ENCODE measurements at regions of chr14 and their contacts with region 1.

Region 1: DNA sequence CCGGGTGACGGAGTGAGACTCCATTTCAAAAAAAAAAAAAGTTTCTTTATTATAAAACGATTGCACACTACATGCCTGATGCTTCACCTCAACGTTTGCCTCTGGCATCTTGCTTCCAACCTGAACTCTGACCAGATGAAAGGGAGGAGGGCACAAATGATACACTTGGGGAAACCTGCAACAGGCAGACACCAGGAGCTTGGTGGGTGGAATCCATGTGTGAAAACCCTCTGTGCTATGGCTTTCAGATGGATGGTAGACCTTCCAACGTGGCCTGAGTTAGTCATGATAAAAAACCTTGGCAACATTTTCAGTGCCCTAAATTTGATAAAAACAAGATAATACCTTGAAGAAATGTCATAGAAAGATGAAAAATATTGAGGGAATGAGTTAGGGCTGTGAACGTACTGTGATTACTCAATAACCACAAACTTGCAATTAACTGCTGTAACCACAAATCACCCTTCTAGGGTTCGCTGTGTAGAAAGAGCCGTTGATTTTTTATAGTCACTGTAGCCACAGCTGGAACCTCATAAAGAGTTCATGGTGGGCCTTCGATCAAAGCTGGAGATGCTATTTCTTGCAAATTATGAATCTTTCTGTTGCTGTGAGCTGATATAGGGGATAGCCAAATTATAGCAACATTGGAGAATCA is 26.1 kb upstream of the GZMB start:
- DNase-seq: no peak
- H3K4me3 Mint-ChIP-seq: peak overlapping the region; percentile 69
- H3K27ac Mint-ChIP-seq: peak overlapping the region; percentile 90
- H3K4me1 Mint-ChIP-seq: peaks cover 68% of the 10 kb centered on the region
- H3K27me3 Mint-ChIP-seq: no peaks in the 10 kb centered on the region

Region 2: GRCh38 chr14:24605435-24606190 is 54.4 kb before region 1 on chr14:
- intact Hi-C with region 1: no loop called
- DNase-seq: peak; percentile 63
- H3K4me3 Mint-ChIP-seq: peak overlapping the region; percentile 74
- H3K27ac Mint-ChIP-seq: peak overlapping the region; percentile 88
- H3K4me1 Mint-ChIP-seq: peaks cover 49% of the 10 kb centered on the region
- H3K27me3 Mint-ChIP-seq: peaks cover 1% of the 10 kb centered on the region

Region 3: GRCh38 chr14:24639905-24640304 is 20.1 kb before region 1 on chr14:
- intact Hi-C with region 1: loop called (anchors 1 kb)
- DNase-seq: no peak
- H3K4me3 Mint-ChIP-seq: peak overlapping the region; percentile 0
- H3K27ac Mint-ChIP-seq: peak overlapping the region; percentile 76
- H3K4me1 Mint-ChIP-seq: peaks cover 60% of the 10 kb centered on the region
- H3K27me3 Mint-ChIP-seq: no peaks in the 10 kb centered on the region

Region 4: GRCh38 chr14:24673534-24674203 is 13.6 kb after region 1 on chr14:
- intact Hi-C with region 1: loop called (anchors 1 kb)
- DNase-seq: peak; percentile 75
- H3K4me3 Mint-ChIP-seq: peak overlapping the region; percentile 73
- H3K27ac Mint-ChIP-seq: peak overlapping the region; percentile 97
- H3K4me1 Mint-ChIP-seq: peaks cover 78% of the 10 kb centered on the region
- H3K27me3 Mint-ChIP-seq: no peaks in the 10 kb centered on the region

Region 5: GRCh38 chr14:24828486-24828885 is 168.4 kb after region 1 on chr14:
- intact Hi-C with region 1: no loop called
- DNase-seq: no peak
- H3K4me3 Mint-ChIP-seq: no peak overlapping the region
- H3K27ac Mint-ChIP-seq: no peak overlapping the region
- H3K4me1 Mint-ChIP-seq: no peaks in the 10 kb centered on the region
- H3K27me3 Mint-ChIP-seq: peaks cover 2% of the 10 kb centered on the region

Measured in activated T-helper 2 cell treated with anti-CD3 and anti-CD28 coated beads, Interferon-gamma antibody, Interleukin-2, Interleukin-4, amounts not matched to agents 10 μg/mL and 5 μg/mL and 100 μg/mL, durations not matched to agents 14 hours and 24 hours and 36 hours (primary cell).